OCI-LY7 (cell line): ENCODE measurements at regions of chr5 and their contacts with region 1.

Region 1: DNA sequence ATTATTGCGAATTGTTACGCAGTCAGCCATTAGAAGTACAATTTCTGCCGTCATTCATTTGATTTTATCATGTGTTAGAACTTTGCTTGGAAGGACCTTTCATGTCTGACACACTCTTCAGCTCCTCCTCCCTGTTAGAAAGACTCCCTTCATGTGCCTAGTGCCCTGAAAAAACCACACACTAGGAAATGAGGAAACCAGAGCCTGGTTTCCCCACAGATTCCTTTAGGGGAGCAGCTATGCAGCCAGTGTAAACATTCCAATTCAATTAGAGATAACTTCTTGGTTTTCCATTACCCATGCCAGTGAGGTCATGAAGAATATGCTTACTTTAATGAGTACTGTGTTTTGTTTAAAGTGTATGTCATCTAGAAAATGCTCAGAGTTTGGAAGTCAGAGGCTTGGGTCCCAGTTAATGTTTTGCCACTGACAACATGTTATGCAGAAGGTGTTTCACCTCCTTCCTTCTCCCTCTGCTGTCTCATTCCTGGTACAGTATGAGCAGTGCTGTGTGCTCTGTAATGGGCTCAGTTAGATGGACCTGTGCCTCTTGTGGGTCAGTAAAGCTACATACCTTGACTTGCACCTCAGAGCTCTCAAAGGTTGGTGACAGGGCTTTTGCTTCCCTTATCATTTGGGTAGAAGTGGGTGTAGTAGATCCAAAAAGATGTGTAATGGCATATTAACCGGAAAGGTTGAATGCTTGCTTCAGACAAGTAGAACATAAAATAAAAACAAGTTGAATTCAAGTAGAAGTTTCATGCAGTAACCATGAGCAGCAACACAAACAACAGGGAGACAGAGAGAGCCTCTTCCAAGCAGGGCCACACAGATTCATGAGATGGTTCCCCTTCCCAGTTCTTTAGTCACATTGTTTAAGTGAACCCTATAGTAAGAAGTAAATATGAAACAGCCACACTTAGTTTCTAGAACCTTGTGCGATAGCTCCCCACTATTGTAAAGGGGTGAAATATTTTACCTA is 52.6 kb upstream of the TNFAIP8 start:
- DNase-seq: no peak
- H3K4me3 ChIP-seq: no peak overlapping the region
- H3K27ac ChIP-seq: no peak overlapping the region
- H3K4me1 ChIP-seq: peaks cover 60% of the 10 kb centered on the region
- CTCF ChIP-seq: no peak

Region 2: GRCh38 chr5:119290161-119290569 is 13.0 kb before region 1 on chr5:
- CTCF ChIA-PET with region 1: interaction called, 6 read pairs
- POLR2A ChIA-PET with region 1: interaction called, 10 read pairs
- intact Hi-C with region 1: no loop called
- DNase-seq: peak; percentile 90
- H3K4me3 ChIP-seq: peak overlapping the region; percentile 19
- H3K27ac ChIP-seq: peak overlapping the region; percentile 1
- H3K4me1 ChIP-seq: peaks cover 74% of the 10 kb centered on the region
- CTCF ChIP-seq: no peak